Dorsolateral prefrontal cortex (tissue), 120 donors: ENCODE measurements at regions of chr12 and their contacts with region 1.

Region 1: DNA sequence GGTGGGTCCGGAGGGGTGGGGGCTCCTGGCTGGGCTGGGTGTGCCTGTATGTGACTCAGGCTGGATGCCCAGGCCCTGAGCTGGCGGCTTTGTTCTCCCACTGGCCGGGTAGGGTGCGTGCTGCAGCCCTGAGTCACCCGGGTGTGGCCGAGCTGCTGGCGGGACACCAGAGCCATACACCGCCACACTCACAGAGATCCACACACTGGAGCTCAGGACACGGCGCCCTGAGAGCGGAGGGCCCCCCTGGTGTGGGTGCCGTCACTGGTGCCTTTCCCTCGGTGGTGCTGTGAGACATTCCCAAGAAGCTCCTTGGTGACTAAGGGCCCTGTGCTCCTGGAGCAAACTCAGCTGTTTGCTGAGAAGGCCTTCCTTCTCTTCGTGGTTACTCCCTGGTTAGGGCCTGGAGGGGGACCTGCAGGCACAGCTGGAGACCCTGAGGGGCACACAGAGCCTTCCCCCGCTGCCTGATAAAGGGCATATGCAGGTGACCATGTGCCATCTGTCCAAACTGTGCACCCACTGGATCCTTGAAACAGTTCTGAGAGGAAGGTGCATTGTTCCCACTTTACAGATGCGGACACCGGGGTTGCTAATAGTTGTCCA is 44.3 kb downstream of the KRT80 start:
- DNase-seq: peak in 3 of 10 donors; percentile 20 to 58 (median 24)
- H3K4me3 ChIP-seq: no peak overlapping the region
- H3K27ac ChIP-seq: peak overlapping the region in 34 of 59 donors; percentile 7 to 81 (median 47)
- H3K27me3 ChIP-seq: peaks cover 0 to 9% (median 2%) of the 10 kb centered on the region in 45 donors
- CTCF ChIP-seq: no peak

Region 2: DNA sequence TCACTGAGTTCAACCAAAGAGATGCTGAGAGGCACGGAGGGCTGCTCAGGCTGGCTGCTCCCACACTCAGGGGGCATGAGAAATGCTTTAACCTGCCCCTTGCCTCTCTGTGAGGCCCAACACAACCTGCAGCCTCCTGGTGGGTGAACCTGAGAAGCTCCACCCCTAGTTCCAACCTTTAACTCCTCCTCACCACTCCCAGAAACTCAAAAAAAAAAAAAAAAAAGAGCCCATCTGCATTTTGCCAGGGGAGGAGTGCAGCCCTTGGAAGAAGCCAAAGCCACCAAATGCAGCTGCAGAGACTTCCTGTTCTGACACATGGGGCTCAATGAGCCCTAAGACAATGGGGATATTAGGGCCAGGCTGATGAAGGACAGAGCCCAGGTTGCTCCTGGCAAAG is 657.5 kb after region 1 on chr12:
- intact Hi-C with region 1: loop called in 1 of 2 experiments (anchors 5 kb)
- DNase-seq: no peak
- H3K4me3 ChIP-seq: no peak overlapping the region
- H3K27ac ChIP-seq: no peak overlapping the region
- H3K27me3 ChIP-seq: peaks cover 0 to 16% (median 0%) of the 10 kb centered on the region in 45 donors
- CTCF ChIP-seq: no peak